ENCODE measurements at regions of chr14 and their contacts with region 1.

Region 1: DNA sequence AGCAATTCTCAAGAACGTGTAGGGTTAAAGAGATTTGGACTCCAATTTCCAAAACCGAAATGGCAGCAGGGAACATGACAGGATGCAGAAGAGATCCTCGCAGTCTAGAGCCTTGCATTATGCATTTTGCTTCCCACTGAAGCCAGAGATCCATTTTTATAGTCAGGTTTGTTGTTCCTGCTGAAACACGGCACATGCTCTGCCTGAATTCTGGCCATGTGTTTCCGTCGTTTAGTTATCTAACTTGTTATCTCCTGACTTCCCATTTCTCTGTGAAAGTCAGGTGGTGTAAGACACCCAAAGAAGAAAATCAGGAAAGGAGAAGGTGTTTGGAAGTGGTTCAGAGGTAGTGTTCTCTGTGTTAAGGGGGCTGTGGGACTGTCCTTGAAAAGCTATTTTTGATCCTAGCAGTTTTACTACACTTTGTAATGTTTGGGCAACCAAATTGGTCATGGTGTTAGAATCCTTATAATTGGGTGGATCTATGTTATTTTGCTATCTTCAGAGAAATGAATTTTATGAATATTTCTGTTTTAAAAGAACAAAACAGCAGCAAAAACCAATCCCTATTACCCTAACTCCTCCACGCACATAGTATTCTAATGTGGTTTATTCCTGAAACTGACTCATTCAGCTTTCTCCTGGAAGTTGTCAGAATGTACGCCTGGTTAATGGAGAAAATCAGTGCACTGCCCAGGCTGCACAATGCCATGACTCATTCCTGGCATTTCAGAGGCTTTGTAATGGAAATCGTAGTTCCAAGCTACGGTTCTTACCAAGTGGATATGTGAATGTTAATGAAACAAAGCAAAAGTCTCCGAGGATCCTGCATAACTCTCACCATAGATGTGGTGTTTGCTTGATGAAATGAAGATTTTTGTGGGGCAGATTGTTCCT is 110.1 kb downstream of the SAMD4A start:
- DNase-seq: no peak
- H3K4me3 ChIP-seq: no peak overlapping the region
- H3K27ac ChIP-seq: peak overlapping the region; percentile 63 to 73
- H3K4me1 ChIP-seq: peaks cover 7% of the 10 kb centered on the region
- H3K27me3 ChIP-seq: no peaks in the 10 kb centered on the region
- CTCF ChIP-seq: no peak
- POLR2A ChIP-seq: peak; percentile 7

Region 2: DNA sequence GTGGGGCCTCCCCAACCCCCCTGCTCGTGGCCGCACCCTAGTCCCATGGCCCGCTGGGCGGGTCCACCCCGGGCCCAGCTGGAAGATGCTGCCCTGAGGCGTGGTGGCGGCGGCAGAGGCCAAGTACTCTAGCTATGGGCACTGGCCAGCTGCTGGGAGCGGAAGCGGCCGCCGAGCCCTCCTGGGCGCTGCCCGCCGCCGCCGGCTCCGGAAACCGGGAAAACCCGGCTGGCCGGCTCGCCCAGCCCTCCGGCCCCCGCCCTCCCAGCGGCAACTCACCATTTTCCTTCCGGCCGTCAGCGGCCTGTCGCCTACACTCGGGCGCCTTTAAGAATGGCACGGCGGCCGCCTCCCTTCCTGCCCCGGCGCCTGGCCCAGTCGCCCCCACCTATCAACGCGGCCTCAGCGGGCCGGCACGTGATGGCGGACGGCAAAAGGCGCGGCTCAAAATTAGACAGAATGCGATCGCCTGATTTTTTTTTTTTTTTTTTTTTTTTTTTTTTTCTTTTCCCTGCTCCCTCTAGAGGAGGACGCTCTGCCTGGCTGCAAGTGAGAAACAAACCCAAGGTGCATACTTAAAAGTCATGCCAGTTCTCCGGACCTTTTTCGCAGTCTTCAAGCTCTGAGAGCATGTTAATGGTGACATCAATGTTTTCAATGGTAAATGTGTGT is 188.3 kb before region 1 on chr14 and contains the start of gene GMFB:
- intact Hi-C with region 1: no loop called
- DNase-seq: peak; percentile 90
- H3K4me3 ChIP-seq: peak within 1 kb of the TSS; percentile 58 to 78
- H3K27ac ChIP-seq: peak within 1 kb of the TSS; percentile 82 to 90
- H3K4me1 ChIP-seq: peaks cover 9% of the 10 kb centered on the region
- H3K27me3 ChIP-seq: no peaks in the 10 kb centered on the region
- CTCF ChIP-seq: peak in 3 of 4 experiments; percentile 25 to 46 (median 38)
- POLR2A ChIP-seq: peak; percentile 67
- total RNA-seq, gene GMFB: 19.2 to 37.1 TPM

Region 3: GRCh38 chr14:54642801-54643697 is 34.0 kb before region 1 on chr14:
- intact Hi-C with region 1: loop called (anchors 5 kb)
- DNase-seq: no peak
- H3K4me3 ChIP-seq: no peak overlapping the region
- H3K27ac ChIP-seq: no peak overlapping the region
- H3K4me1 ChIP-seq: no peaks in the 10 kb centered on the region
- H3K27me3 ChIP-seq: no peaks in the 10 kb centered on the region
- CTCF ChIP-seq: no peak
- POLR2A ChIP-seq: no peak

Region 4: GRCh38 chr14:55129428-55130195 is 452.6 kb after region 1 on chr14:
- intact Hi-C with region 1: no loop called
- DNase-seq: peak; percentile 53
- H3K4me3 ChIP-seq: peak overlapping the region; percentile 74 to 80
- H3K27ac ChIP-seq: peak overlapping the region; percentile 90 to 91
- H3K4me1 ChIP-seq: peaks cover 5% of the 10 kb centered on the region
- H3K27me3 ChIP-seq: no peaks in the 10 kb centered on the region
- CTCF ChIP-seq: no peak
- POLR2A ChIP-seq: no peak